ENCODE measurements at regions of chr19 and their contacts with region 1.

Region 1: GRCh38 chr19:18450931-18451845 is 13.3 kb upstream of the ISYNA1 start:
- DNase-seq: peak; percentile 78
- H3K4me3 ChIP-seq: no peak overlapping the region
- H3K27ac ChIP-seq: no peak overlapping the region
- H3K4me1 ChIP-seq: no peaks in the 10 kb centered on the region
- H3K27me3 ChIP-seq: no peaks in the 10 kb centered on the region
- CTCF ChIP-seq: peak; percentile 94 to 97 (median 94)
- POLR2A ChIP-seq: no peak

Region 2: GRCh38 chr19:18571564-18572300 is 120.5 kb after region 1 on chr19 and contains the start of gene UBA52:
- intact Hi-C with region 1: loop called (anchors 5 kb)
- DNase-seq: peak; percentile 98
- H3K4me3 ChIP-seq: peak within 1 kb of the TSS; percentile 75 to 79
- H3K27ac ChIP-seq: peak within 1 kb of the TSS; percentile 80 to 82
- H3K4me1 ChIP-seq: peaks cover 11% of the 10 kb centered on the region
- H3K27me3 ChIP-seq: no peaks in the 10 kb centered on the region
- CTCF ChIP-seq: peak in 2 of 4 experiments; percentile 16 to 42
- POLR2A ChIP-seq: peak; percentile 84
- total RNA-seq, gene UBA52: 646 to 738 TPM

Region 3: GRCh38 chr19:18588611-18589379 is 137.6 kb after region 1 on chr19 and contains the start of gene REX1BD:
- intact Hi-C with region 1: loop called (anchors 2 kb)
- DNase-seq: peak; percentile 58
- H3K4me3 ChIP-seq: peak within 1 kb of the TSS; percentile 66 to 84
- H3K27ac ChIP-seq: peak within 1 kb of the TSS; percentile 78 to 79
- H3K4me1 ChIP-seq: peaks cover 5% of the 10 kb centered on the region
- H3K27me3 ChIP-seq: no peaks in the 10 kb centered on the region
- CTCF ChIP-seq: peak; percentile 53 to 87 (median 82)
- POLR2A ChIP-seq: peak; percentile 31
- total RNA-seq, gene REX1BD: 98.9 to 149 TPM